Naive thymus-derived CD4-positive, alpha-beta T cell (primary cell): ENCODE measurements at regions of chr16 and their contacts with region 1.

Region 1: DNA sequence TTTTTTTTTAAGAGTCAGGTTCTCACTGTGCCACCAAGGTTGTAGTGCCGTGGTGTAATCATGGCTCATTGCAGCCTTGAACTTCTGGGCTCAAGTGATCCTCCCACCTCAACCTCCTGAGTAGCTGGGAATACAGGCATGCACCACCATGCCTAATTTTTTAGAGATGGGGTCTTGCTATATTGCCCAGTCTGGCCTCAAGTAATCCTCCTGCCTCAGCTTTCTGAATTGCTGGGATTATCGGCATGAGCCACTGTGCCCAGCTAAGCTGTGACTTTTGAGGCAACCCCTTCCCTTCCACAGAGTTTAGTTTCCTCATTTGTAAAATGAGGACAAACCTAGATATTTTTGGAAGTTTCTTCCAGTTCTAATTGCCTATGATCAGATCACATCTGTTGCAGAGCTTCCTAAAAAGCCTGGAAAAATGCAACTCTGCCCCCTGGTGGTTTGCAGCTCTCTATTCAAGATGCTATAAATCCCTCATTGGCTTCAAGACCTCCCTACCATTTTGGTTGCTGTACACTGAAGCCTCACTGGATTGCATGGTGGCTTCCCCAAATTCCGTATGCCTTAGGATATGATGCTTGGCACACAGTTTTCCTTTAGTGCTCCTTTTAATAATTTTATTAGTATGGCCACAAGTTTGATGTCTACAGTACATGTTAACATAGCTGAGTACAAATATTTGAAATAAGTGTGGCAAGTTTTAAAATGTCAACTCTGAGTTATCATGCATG is 19.3 kb downstream of the GDE1 start:
- DNase-seq: peak in 8 of 9 donors; percentile 23 to 59 (median 48)
- ATAC-seq: peak; percentile 71
- H3K4me3 ChIP-seq: no peak overlapping the region
- H3K4me3 Mint-ChIP-seq: no peak overlapping the region
- H3K27ac ChIP-seq: no peak overlapping the region
- H3K27ac Mint-ChIP-seq: no peak overlapping the region
- H3K4me1 ChIP-seq: no peaks in the 10 kb centered on the region
- H3K4me1 Mint-ChIP-seq: no peaks in the 10 kb centered on the region
- H3K27me3 ChIP-seq: no peaks in the 10 kb centered on the region
- H3K27me3 Mint-ChIP-seq: no peaks in the 10 kb centered on the region

Region 2: GRCh38 chr16:19389246-19389645 is 113.3 kb before region 1 on chr16:
- CTCF ChIA-PET with region 1: no interaction called
- POLR2A ChIA-PET with region 1: no interaction called
- intact Hi-C with region 1: loop called in 1 of 2 experiments (anchors 1 kb)
- DNase-seq: peak in 4 of 9 donors; percentile 2 to 53 (median 12)
- ATAC-seq: no peak
- H3K4me3 ChIP-seq: no peak overlapping the region
- H3K4me3 Mint-ChIP-seq: no peak overlapping the region
- H3K27ac ChIP-seq: no peak overlapping the region
- H3K27ac Mint-ChIP-seq: no peak overlapping the region
- H3K4me1 ChIP-seq: no peaks in the 10 kb centered on the region
- H3K4me1 Mint-ChIP-seq: peaks cover 0 to 13% (median 0%) of the 10 kb centered on the region in 7 donors
- H3K27me3 ChIP-seq: peaks cover 0 to 2% of the 10 kb centered on the region in 2 donors
- H3K27me3 Mint-ChIP-seq: peaks cover 7 to 54% (median 45%) of the 10 kb centered on the region in 5 donors

Region 3: DNA sequence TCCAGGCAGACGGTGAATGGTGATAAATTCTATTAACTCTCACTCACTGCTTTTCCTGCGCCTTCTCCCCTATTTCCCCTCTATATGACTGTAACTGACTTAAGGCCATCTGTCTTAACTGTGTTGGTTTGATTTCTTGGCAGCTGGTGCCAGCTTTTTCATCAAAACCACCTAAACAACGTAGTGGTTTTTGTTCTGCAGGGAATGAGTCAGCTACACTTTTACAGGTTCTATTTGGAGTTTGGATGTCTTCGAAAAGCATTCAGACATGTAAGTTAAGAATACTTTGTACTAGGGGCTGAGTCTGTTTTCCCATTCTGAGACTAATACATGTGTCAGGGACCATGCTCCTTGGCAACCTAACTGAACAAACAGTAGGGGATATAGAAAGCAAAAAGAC is 1312.2 kb after region 1 on chr16:
- CTCF ChIA-PET with region 1: interaction called, 4 read pairs
- POLR2A ChIA-PET with region 1: no interaction called
- intact Hi-C with region 1: loop called in 1 of 2 experiments (anchors 5 kb)
- DNase-seq: no peak
- ATAC-seq: no peak
- H3K4me3 ChIP-seq: no peak overlapping the region
- H3K4me3 Mint-ChIP-seq: no peak overlapping the region
- H3K27ac ChIP-seq: no peak overlapping the region
- H3K27ac Mint-ChIP-seq: peak overlapping the region in 1 of 9 donors; percentile 66
- H3K4me1 ChIP-seq: no peaks in the 10 kb centered on the region
- H3K4me1 Mint-ChIP-seq: peaks cover 0 to 17% (median 0%) of the 10 kb centered on the region in 7 donors
- H3K27me3 ChIP-seq: no peaks in the 10 kb centered on the region
- H3K27me3 Mint-ChIP-seq: no peaks in the 10 kb centered on the region